HepG2 (cell line): ENCODE measurements at regions of chr3 and their contacts with region 1.

Region 1: GRCh38 chr3:39241561-39241960 is 38.3 kb downstream of the CX3CR1 start:
- DNase-seq: no peak
- ATAC-seq: no peak
- H3K4me3 ChIP-seq: no peak overlapping the region
- H3K27ac ChIP-seq: no peak overlapping the region
- H3K4me1 ChIP-seq: no peaks in the 10 kb centered on the region
- H3K27me3 ChIP-seq: peaks cover 2 to 12% of the 10 kb centered on the region in 2 experiments; a peak in 1 of 5 replicates
- CTCF ChIP-seq: no peak
- EP300 ChIP-seq: no peak
- POLR2A ChIP-seq: no peak
- RAD21 ChIP-seq: no peak

Region 2: GRCh38 chr3:39254806-39255449 is 13.4 kb after region 1 on chr3:
- CTCF ChIA-PET with region 1: no interaction called
- POLR2A ChIA-PET with region 1: no interaction called
- in situ Hi-C with region 1: no loop called
- intact Hi-C with region 1: loop called (anchors 1 kb)
- DNase-seq: no peak
- ATAC-seq: no peak
- H3K4me3 ChIP-seq: no peak overlapping the region
- H3K27ac ChIP-seq: no peak overlapping the region
- H3K4me1 ChIP-seq: no peaks in the 10 kb centered on the region
- H3K27me3 ChIP-seq: peaks cover 3 to 34% of the 10 kb centered on the region in 2 experiments; a peak in 4 of 5 replicates
- CTCF ChIP-seq: no peak
- EP300 ChIP-seq: no peak
- POLR2A ChIP-seq: no peak
- RAD21 ChIP-seq: no peak

Region 3: DNA sequence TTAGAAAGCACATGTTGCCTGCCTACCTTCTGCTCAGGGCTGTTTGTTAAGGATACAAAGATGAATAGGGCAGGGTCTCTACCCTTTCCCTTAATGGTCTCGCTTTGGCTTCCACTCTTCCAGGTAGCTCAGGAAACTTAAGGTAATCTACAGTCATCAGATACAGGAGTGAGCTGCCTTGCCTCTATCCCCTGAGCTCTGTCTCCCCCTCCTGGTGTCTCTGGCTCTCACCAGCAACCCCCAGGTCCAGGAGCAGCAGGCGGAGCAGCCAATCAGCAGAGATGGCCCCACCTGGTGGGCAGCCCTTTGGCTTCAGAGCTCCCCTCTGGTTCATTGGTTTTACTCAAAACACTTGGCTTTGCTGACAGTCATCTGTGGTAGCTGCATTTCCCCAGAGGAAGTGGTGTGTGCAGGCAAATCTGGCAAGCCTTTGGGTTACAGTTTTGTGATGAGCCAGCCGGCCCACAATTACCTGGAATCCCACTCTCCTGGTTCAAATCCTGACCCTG is 46.8 kb after region 1 on chr3:
- CTCF ChIA-PET with region 1: no interaction called
- POLR2A ChIA-PET with region 1: no interaction called
- in situ Hi-C with region 1: no loop called
- intact Hi-C with region 1: no loop called
- DNase-seq: peak; percentile 74
- ATAC-seq: peak; percentile 96
- H3K4me3 ChIP-seq: no peak overlapping the region
- H3K27ac ChIP-seq: no peak overlapping the region
- H3K4me1 ChIP-seq: peaks cover 43% of the 10 kb centered on the region
- H3K27me3 ChIP-seq: no peaks in the 10 kb centered on the region
- CTCF ChIP-seq: peak; percentile 97
- EP300 ChIP-seq: no peak
- POLR2A ChIP-seq: no peak
- RAD21 ChIP-seq: peak; percentile 95

Region 4: GRCh38 chr3:39361252-39361927 is 119.8 kb after region 1 on chr3:
- CTCF ChIA-PET with region 1: no interaction called
- POLR2A ChIA-PET with region 1: no interaction called
- in situ Hi-C with region 1: no loop called
- intact Hi-C with region 1: no loop called
- DNase-seq: no peak
- ATAC-seq: no peak
- H3K4me3 ChIP-seq: no peak overlapping the region
- H3K27ac ChIP-seq: no peak overlapping the region
- H3K4me1 ChIP-seq: peaks cover 19% of the 10 kb centered on the region
- H3K27me3 ChIP-seq: no peaks in the 10 kb centered on the region
- CTCF ChIP-seq: no peak
- EP300 ChIP-seq: no peak
- POLR2A ChIP-seq: no peak
- RAD21 ChIP-seq: no peak

Region 5: GRCh38 chr3:39453134-39453533 is 211.6 kb after region 1 on chr3:
- CTCF ChIA-PET with region 1: no interaction called
- POLR2A ChIA-PET with region 1: no interaction called
- in situ Hi-C with region 1: no loop called
- intact Hi-C with region 1: no loop called
- DNase-seq: no peak
- ATAC-seq: no peak
- H3K4me3 ChIP-seq: no peak overlapping the region
- H3K27ac ChIP-seq: no peak overlapping the region
- H3K4me1 ChIP-seq: no peaks in the 10 kb centered on the region
- H3K27me3 ChIP-seq: no peaks in the 10 kb centered on the region
- CTCF ChIP-seq: no peak
- EP300 ChIP-seq: no peak
- POLR2A ChIP-seq: no peak
- RAD21 ChIP-seq: no peak